Activated naive CD4-positive, alpha-beta T cell treated with anti-CD3 and anti-CD28 coated beads for 36 hours (primary cell): ENCODE measurements at regions of chr5 and their contacts with region 1.

Region 1: GRCh38 chr5:144191998-144192397 is 21.3 kb downstream of the KCTD16 start:
- DNase-seq: peak; percentile 50
- H3K4me3 Mint-ChIP-seq: no peak overlapping the region
- H3K27ac Mint-ChIP-seq: no peak overlapping the region
- H3K4me1 Mint-ChIP-seq: peaks cover 30% of the 10 kb centered on the region
- H3K27me3 Mint-ChIP-seq: no peaks in the 10 kb centered on the region

Region 2: DNA sequence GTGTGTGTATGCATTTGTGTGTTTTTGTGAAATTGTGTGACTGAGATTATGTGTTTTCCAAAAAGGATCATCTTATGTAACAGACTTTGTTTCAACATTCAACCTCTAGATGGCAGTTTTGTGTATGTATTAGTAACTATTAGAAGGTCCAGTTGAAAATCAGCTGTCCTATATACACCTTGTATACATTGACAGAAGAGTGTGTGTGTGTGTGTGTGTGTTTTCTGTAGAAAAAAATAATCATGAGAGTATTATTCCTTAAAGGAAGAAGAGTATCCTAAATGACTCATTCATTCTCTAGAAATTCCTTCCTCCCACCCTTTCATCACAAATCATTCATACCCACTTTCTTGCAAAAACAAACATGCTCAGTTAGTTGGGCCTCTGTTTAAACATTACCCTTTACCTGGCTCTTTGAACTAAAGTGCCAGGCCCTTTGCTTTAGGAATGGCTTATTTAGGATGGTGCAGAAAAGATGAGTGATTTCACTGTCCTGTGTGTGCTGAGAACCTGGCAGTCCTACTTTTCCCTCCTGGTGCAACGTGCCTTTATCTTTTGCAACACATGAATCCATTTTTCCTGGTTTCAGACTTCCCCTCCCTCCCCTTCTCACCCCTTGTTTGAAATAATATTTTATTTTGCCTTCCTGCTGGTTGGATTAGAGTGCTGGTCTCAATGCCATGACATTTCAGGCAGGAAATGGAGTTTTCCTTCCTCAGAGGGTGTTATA is 1269.6 kb before region 1 on chr5:
- CTCF ChIA-PET with region 1: no interaction called
- intact Hi-C with region 1: loop called (anchors 2 kb)
- DNase-seq: no peak
- H3K4me3 Mint-ChIP-seq: no peak overlapping the region
- H3K27ac Mint-ChIP-seq: no peak overlapping the region
- H3K4me1 Mint-ChIP-seq: peaks cover 13% of the 10 kb centered on the region
- H3K27me3 Mint-ChIP-seq: no peaks in the 10 kb centered on the region

Region 3: GRCh38 chr5:143182901-143183820 is 1008.8 kb before region 1 on chr5:
- CTCF ChIA-PET with region 1: no interaction called
- intact Hi-C with region 1: loop called (anchors 10 kb)
- DNase-seq: peak; percentile 73
- H3K4me3 Mint-ChIP-seq: no peak overlapping the region
- H3K27ac Mint-ChIP-seq: peak overlapping the region; percentile 68
- H3K4me1 Mint-ChIP-seq: peaks cover 29% of the 10 kb centered on the region
- H3K27me3 Mint-ChIP-seq: no peaks in the 10 kb centered on the region

Region 4: DNA sequence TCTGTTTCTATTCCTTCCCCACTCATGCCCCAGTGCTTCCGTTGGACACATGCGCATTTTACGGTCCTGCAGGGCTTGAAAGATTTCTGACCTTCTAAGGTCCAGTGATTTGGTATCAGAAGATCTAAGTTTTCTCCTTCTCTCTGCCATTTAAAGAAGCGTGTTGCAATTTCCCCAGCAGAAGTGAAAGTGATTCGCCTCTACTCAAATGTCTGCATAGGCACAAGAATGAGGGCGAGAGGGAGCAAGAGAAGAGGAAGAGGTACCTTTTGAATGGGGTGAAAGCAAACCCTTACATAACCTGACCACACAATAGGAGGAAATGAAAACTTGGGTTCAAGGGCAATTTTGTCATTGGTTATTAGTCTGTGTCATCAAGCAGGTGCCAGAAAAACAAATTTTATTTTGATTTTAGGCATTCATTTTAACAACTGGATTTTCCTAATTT is 756.8 kb before region 1 on chr5:
- CTCF ChIA-PET with region 1: no interaction called
- intact Hi-C with region 1: loop called (anchors 1 kb)
- DNase-seq: peak; percentile 61
- H3K4me3 Mint-ChIP-seq: peak overlapping the region; percentile 83
- H3K27ac Mint-ChIP-seq: peak overlapping the region; percentile 97
- H3K4me1 Mint-ChIP-seq: peaks cover 68% of the 10 kb centered on the region
- H3K27me3 Mint-ChIP-seq: no peaks in the 10 kb centered on the region

Region 5: DNA sequence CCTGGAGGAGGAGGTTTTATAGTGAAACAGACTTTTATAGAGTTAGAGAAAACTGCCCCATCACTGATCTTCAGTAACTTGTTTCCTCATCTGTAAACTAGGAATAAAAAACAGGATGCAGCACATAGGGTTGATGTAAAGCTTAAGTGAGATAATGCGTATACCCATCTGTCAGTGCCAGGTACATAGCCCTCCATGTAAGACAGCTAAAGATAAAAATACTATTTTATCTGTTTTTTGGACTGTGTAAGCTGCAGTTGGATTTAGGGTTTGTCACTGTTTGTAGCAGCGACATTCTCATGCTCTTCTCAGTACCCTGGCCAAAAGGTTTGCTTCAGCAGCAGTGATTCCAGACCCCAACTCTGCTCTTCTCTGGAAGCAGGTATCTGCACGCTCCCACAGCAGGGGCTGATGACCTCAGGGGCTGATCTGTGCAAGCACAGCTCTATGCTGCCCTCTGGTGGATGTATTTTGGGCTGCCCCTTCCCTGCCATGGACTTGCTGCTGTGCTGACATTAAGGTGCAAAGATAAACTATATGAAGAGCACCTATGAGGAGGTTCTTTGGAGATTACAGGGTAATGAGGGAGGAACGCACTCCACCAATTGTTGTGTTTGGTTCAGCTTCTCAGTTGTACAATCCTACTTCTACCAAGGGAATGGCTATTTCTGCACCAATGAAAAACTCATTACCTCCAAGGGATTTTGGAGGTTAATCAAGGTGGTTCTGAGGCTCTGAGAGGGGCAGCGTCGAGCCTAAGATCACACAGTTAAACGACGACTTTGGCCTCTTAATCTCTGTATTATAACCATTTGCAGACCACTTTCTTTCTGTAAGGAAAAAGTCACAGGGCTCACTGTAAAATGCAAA is 366.9 kb before region 1 on chr5:
- CTCF ChIA-PET with region 1: interaction called, 3 read pairs
- intact Hi-C with region 1: loop called (anchors 1 kb)
- DNase-seq: peak; percentile 90
- H3K4me3 Mint-ChIP-seq: no peak overlapping the region
- H3K27ac Mint-ChIP-seq: no peak overlapping the region
- H3K4me1 Mint-ChIP-seq: peaks cover 17% of the 10 kb centered on the region
- H3K27me3 Mint-ChIP-seq: no peaks in the 10 kb centered on the region

Region 6: GRCh38 chr5:143979044-143979690 is 212.8 kb before region 1 on chr5:
- CTCF ChIA-PET with region 1: no interaction called
- intact Hi-C with region 1: loop called (anchors 2 kb)
- DNase-seq: peak; percentile 8
- H3K4me3 Mint-ChIP-seq: no peak overlapping the region
- H3K27ac Mint-ChIP-seq: peak overlapping the region; percentile 38
- H3K4me1 Mint-ChIP-seq: peaks cover 3% of the 10 kb centered on the region
- H3K27me3 Mint-ChIP-seq: peaks cover 3% of the 10 kb centered on the region

Region 7: GRCh38 chr5:145946112-145946861 is 1754.3 kb after region 1 on chr5:
- CTCF ChIA-PET with region 1: no interaction called
- intact Hi-C with region 1: loop called (anchors 2 kb)
- DNase-seq: peak; percentile 37
- H3K4me3 Mint-ChIP-seq: no peak overlapping the region
- H3K27ac Mint-ChIP-seq: no peak overlapping the region
- H3K4me1 Mint-ChIP-seq: peaks cover 13% of the 10 kb centered on the region
- H3K27me3 Mint-ChIP-seq: peaks cover 33% of the 10 kb centered on the region